Activated naive CD4-positive, alpha-beta T cell treated with anti-CD3 and anti-CD28 coated beads, Interleukin-2, amount 10 ng/mL, durations not matched to agents 7 days and 5 days (primary cell): ENCODE measurements at regions of chrX and their contacts with region 1.

Region 1: GRCh38 chrX:135740683-135741149 is 27.3 kb downstream of the CT45A3 start:
- DNase-seq: peak; percentile 64
- H3K4me3 Mint-ChIP-seq: peak overlapping the region; percentile 37
- H3K27ac Mint-ChIP-seq: no peak overlapping the region
- H3K4me1 Mint-ChIP-seq: no peaks in the 10 kb centered on the region
- H3K27me3 Mint-ChIP-seq: peaks cover 8% of the 10 kb centered on the region

Region 2: GRCh38 chrX:135596495-135596894 is 144.2 kb before region 1 on chrX:
- CTCF ChIA-PET with region 1: no interaction called
- DNase-seq: peak; percentile 56
- H3K4me3 Mint-ChIP-seq: no peak overlapping the region
- H3K27ac Mint-ChIP-seq: no peak overlapping the region
- H3K4me1 Mint-ChIP-seq: no peaks in the 10 kb centered on the region
- H3K27me3 Mint-ChIP-seq: peaks cover 10% of the 10 kb centered on the region

Region 3: DNA sequence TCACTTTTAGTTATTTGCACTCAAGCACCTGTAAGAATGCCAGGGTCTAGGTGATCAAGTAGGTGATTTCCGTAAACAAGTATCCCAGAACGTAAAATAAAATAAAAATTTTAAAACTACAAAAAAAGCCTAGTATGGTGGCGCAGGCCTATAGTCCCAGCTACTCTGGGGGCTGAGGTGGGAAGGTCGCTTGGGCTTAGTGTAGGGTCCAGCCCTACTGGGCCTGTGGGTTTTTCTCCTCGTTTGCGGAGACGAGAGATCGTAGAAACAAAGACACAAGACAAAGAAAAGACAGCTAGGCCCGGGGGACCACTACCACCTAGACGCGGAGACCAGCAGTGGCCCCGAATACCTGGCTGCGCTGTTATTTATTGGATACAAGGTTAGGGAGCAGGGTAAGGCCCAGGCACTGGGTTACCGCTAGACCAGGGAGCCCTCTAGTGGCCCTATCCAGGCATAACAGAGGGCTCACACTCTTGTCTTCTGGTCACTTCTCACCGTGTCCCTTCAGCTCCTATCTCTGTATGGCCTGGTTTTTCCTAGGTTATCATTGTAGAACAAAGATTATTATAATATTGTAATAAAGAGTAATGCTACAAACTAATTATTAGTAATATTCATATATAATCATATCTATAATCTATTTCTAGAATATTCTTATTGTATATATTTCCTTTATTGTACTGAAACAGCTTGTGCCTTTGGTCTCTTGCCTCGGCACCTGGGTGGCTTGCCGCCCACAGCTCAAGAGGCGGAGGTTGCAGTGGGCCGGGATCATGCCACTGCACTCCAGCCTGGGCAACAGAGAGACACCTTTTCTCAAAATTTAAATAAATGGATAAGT is 191.2 kb after region 1 on chrX:
- CTCF ChIA-PET with region 1: interaction called, 11 read pairs
- DNase-seq: peak; percentile 58
- H3K4me3 Mint-ChIP-seq: no peak overlapping the region
- H3K27ac Mint-ChIP-seq: no peak overlapping the region
- H3K4me1 Mint-ChIP-seq: no peaks in the 10 kb centered on the region
- H3K27me3 Mint-ChIP-seq: no peaks in the 10 kb centered on the region

Region 4: GRCh38 chrX:135951291-135951690 is 210.6 kb after region 1 on chrX:
- CTCF ChIA-PET with region 1: no interaction called
- DNase-seq: no peak
- H3K4me3 Mint-ChIP-seq: no peak overlapping the region
- H3K27ac Mint-ChIP-seq: no peak overlapping the region
- H3K4me1 Mint-ChIP-seq: no peaks in the 10 kb centered on the region
- H3K27me3 Mint-ChIP-seq: no peaks in the 10 kb centered on the region